ENCODE measurements at regions of chr19 and their contacts with region 1.

Region 1: DNA sequence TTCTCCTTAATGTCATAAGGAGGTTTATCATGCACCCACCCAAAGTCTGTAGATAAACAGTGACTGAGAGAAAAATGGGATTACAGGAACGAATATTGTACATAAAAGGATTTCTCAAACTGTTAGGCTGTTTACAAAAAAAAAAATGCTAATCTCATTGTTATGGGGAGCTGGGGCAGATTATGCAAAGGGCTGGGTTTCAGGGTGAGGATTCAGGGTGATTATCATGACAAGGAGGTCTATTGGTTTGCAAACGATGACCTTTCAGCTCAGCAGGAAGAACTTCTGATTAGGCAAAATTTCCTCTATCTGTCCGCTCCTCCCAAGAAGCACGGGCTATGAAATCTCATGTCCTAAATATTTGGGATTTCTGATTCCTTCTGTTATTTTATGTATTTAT is 41.4 kb downstream of the NLRP12 start:
- DNase-seq: no peak
- ATAC-seq: no peak
- H3K4me3 ChIP-seq: no peak overlapping the region
- H3K27ac ChIP-seq: no peak overlapping the region
- H3K4me1 ChIP-seq: no peaks in the 10 kb centered on the region
- H3K27me3 ChIP-seq: no peaks in the 10 kb centered on the region
- CTCF ChIP-seq: no peak

Region 2: GRCh38 chr19:53947624-53948023 is 164.9 kb after region 1 on chr19:
- CTCF ChIA-PET with region 1: interaction called, 10 read pairs
- POLR2A ChIA-PET with region 1: no interaction called
- in situ Hi-C with region 1: no loop called
- intact Hi-C with region 1: no loop called
- DNase-seq: no peak
- ATAC-seq: peak; percentile 73
- H3K4me3 ChIP-seq: no peak overlapping the region
- H3K27ac ChIP-seq: no peak overlapping the region
- H3K4me1 ChIP-seq: peaks cover 7% of the 10 kb centered on the region; the same call in 1 of the 2 replicates
- H3K27me3 ChIP-seq: no peaks in the 10 kb centered on the region
- CTCF ChIP-seq: no peak; the same call in 1 of the 2 replicates

Measured in Panc1 (cell line).